ENCODE measurements at regions of chr6 and their contacts with region 1.

Region 1: GRCh38 chr6:2542858-2543218 is 207.9 kb downstream of the MYLK4 start:
- DNase-seq: peak; percentile 74
- H3K4me3 Mint-ChIP-seq: no peak overlapping the region
- H3K27ac Mint-ChIP-seq: peak overlapping the region; percentile 18
- H3K4me1 Mint-ChIP-seq: peaks cover 32% of the 10 kb centered on the region
- H3K27me3 Mint-ChIP-seq: peaks cover 64% of the 10 kb centered on the region

Region 2: GRCh38 chr6:2563635-2564034 is 20.8 kb after region 1 on chr6:
- intact Hi-C with region 1: loop called (anchors 1 kb)
- DNase-seq: no peak
- H3K4me3 Mint-ChIP-seq: no peak overlapping the region
- H3K27ac Mint-ChIP-seq: no peak overlapping the region
- H3K4me1 Mint-ChIP-seq: peaks cover 11% of the 10 kb centered on the region
- H3K27me3 Mint-ChIP-seq: peaks cover 84% of the 10 kb centered on the region

Region 3: DNA sequence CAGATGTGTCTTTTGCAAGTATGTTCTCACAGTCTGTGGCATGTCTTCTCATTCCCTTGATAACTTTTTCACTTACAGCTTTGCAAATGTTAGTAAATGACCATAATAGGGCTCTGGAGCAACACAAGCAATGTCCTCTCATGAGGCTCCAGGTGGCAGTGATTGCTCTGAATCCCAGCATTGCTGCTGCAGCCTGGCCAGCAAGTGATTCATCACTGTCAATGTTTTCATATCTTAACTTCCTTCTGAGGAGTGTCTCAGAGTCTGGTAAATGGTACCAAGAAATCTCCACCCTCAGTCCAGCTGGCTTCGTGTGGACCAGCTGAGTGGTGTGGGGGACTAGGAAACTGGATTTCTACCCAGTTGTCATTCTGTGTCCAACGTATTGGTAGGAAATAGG is 68.3 kb after region 1 on chr6:
- intact Hi-C with region 1: no loop called
- DNase-seq: no peak
- H3K4me3 Mint-ChIP-seq: no peak overlapping the region
- H3K27ac Mint-ChIP-seq: no peak overlapping the region
- H3K4me1 Mint-ChIP-seq: no peaks in the 10 kb centered on the region
- H3K27me3 Mint-ChIP-seq: peaks cover 31% of the 10 kb centered on the region

Measured in activated T-helper 2 cell treated with anti-CD3 and anti-CD28 coated beads, Interferon-gamma antibody, Interleukin-2, Interleukin-4, amounts not matched to agents 10 μg/mL and 5 μg/mL and 100 μg/mL, durations not matched to agents 14 hours and 24 hours and 36 hours (primary cell).